ENCODE measurements at regions of chr10 and their contacts with region 1.

Region 1: GRCh38 chr10:79242620-79243152 is 104.6 kb upstream of the PPIF start:
- DNase-seq: peak; percentile 66
- H3K4me3 Mint-ChIP-seq: peak overlapping the region; percentile 78
- H3K27ac Mint-ChIP-seq: peak overlapping the region; percentile 78
- H3K4me1 Mint-ChIP-seq: peaks cover 56% of the 10 kb centered on the region
- H3K27me3 Mint-ChIP-seq: no peaks in the 10 kb centered on the region

Region 2: DNA sequence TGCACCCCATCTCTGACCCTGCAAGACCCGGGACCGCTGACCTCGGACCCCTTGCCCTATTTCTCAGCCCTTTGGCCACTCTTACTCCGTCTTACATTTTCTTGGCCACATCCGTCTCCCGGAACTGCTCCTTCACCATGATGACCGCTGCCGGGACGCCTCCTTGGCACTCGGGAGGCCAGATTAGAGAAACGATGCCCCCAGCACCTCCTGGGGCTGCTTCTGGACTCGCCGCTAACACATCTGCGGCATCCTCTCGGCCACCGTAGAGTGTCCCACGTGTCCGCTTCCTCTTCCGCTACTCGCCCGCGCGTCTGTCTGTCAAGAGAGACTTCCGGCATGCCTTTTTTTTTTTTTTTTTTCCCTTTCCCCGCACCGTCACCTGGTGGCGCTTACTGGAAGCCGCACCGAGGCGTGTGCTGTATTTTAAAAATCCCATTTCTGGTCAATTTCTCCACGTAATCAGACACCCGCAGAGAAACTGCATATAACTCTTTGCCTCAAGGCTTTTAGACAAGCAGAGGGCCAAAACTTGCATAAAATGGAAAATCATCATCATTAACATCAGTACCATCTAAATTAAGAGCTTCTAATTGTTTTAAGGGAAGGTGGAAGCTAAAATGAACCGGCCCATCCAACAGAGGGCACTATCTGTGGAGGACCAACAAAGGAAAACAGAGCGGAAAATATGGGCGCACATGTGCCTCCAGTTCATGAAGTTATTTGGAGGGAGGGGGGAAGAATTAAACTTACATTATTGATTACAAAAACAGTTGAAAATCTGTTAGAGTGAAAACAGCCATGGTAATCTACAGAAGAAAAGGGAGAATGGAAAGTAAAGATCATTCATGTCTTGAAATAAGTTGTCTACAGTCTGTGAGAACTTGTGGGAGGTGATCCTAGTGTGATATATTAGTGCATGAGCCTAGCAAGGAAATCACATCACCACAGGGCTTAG is 1213.1 kb before region 1 on chr10 and contains the start of gene POLR3A:
- intact Hi-C with region 1: loop called (anchors 1 kb)
- DNase-seq: peak; percentile 90
- H3K4me3 Mint-ChIP-seq: peak within 1 kb of the TSS; percentile 99
- H3K27ac Mint-ChIP-seq: peak within 1 kb of the TSS; percentile 94
- H3K4me1 Mint-ChIP-seq: peaks cover 22% of the 10 kb centered on the region
- H3K27me3 Mint-ChIP-seq: no peaks in the 10 kb centered on the region
- total RNA-seq, gene POLR3A: 23.5 and 24.2 TPM in 2 replicates

Region 3: GRCh38 chr10:78579995-78580394 is 662.7 kb before region 1 on chr10:
- intact Hi-C with region 1: loop called (anchors 2 kb)
- DNase-seq: no peak
- H3K4me3 Mint-ChIP-seq: no peak overlapping the region
- H3K27ac Mint-ChIP-seq: no peak overlapping the region
- H3K4me1 Mint-ChIP-seq: peaks cover 18% of the 10 kb centered on the region
- H3K27me3 Mint-ChIP-seq: peaks cover 2% of the 10 kb centered on the region

Region 4: GRCh38 chr10:79137826-79138225 is 104.9 kb before region 1 on chr10:
- intact Hi-C with region 1: loop called (anchors 5 kb)
- DNase-seq: peak; percentile 50
- H3K4me3 Mint-ChIP-seq: peak overlapping the region; percentile 62
- H3K27ac Mint-ChIP-seq: peak overlapping the region; percentile 91
- H3K4me1 Mint-ChIP-seq: peaks cover 39% of the 10 kb centered on the region
- H3K27me3 Mint-ChIP-seq: no peaks in the 10 kb centered on the region

Region 5: DNA sequence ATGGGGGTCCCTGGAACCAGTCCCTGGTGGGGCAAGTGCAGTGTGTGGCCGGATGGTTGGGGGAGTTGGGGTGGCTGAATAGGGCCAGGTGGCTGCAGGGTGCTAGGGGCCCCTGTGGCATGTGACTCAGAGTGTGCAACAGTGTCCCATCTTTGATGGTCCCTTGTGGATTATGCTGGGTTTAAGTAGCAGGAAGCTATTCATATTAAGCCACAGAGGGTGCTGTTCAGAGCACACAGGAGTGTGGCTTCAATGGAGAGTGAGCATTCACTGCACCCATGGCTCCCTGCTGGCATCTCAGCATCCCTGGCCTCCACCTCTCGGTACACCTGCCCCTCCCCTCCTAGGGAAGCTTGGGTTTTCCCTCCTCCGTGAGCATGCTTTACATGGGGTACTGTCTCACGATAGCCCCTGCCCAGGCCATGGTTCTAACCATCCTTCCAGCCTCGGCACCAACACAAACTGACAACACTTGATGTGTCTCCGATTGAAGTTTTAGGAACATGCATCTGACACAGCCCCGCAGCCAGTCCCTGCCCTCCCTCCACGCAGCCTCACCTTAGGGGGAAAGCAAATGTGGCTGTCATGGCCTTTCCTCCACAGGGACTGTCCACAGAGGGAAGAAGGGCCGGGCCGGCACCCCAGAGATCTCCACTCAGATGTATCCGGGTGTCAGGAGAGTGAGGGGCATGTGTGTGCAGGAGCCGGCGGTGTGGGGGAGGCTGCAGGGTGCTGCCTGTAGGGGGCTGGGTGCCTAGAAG is 74.2 kb after region 1 on chr10:
- intact Hi-C with region 1: loop called (anchors 2 kb)
- DNase-seq: no peak
- H3K4me3 Mint-ChIP-seq: peak overlapping the region; percentile 52
- H3K27ac Mint-ChIP-seq: peak overlapping the region; percentile 81
- H3K4me1 Mint-ChIP-seq: peaks cover 62% of the 10 kb centered on the region
- H3K27me3 Mint-ChIP-seq: no peaks in the 10 kb centered on the region

Region 6: DNA sequence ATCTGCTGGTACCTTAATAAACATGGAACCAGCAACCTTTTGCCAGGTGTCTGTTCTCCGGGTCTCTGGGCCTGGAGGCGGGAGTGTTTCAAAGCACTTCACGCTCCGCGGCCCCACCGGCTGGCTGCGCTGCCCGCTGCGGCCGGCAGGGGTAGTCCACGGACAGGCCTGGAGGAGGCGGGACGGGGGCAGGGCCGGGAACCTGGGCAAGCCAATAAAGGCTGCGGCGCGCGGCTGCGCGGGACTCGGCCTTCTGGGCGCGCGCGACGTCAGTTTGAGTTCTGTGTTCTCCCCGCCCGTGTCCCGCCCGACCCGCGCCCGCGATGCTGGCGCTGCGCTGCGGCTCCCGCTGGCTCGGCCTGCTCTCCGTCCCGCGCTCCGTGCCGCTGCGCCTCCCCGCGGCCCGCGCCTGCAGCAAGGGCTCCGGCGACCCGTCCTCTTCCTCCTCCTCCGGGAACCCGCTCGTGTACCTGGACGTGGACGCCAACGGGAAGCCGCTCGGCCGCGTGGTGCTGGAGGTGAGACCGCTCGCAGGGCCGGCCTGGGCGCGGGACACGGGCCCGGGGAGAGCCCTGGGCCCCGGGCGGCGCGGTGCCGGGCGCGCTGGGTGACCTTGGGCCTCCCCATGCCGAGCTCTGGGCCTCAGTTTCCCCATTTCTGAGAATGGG is 104.7 kb after region 1 on chr10 and contains the start of gene PPIF:
- intact Hi-C with region 1: loop called (anchors 5 kb)
- DNase-seq: peak; percentile 92
- H3K4me3 Mint-ChIP-seq: peak within 1 kb of the TSS; percentile 93
- H3K27ac Mint-ChIP-seq: peak within 1 kb of the TSS; percentile 91
- H3K4me1 Mint-ChIP-seq: peaks cover 40% of the 10 kb centered on the region
- H3K27me3 Mint-ChIP-seq: no peaks in the 10 kb centered on the region
- total RNA-seq, gene PPIF: 119 and 120 TPM in 2 replicates